ENCODE measurements at regions of chr4 and their contacts with region 1.

Region 1: DNA sequence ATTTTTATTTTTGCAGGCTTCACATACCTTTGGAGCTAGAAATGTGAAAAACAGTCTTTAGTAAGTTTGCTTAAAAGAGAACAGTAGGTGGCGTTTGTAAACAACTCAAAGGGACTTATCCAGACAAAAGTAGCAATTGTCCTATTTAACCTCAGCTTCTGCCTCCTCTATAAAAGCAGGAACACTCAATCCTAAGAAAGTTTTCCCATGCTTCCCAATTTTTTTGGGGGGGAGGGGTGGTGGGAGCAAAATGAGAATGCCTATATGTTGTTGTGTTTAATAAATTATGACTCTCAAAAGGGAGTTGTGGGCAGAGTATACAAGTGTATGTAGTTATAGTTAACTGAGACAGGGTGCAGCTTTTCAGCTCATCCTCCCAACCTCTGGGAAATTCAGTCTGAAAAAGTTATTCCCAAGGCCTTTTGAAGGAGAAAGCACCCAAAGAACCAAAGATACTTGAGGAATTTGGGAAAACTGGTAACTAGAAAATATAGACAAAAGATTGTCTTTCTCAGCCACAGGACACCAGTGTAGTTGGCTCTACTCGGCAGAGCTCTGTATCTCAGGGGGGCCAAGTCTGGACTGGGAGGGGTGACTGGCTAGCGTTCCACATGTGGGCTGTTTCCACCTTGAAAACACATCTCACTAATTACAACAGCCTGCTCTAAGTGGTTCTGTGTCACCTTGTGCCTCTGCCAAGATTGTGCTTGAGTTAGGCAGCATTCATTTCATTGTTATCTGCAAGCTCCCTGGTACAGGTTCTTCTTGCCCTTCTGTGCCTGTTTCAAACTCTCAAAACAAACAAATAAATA is 2.8 kb downstream of the SFRP2 start:
- DNase-seq: peak; percentile 41
- H3K4me3 Mint-ChIP-seq: no peak overlapping the region
- H3K27ac Mint-ChIP-seq: no peak overlapping the region
- H3K4me1 Mint-ChIP-seq: peaks cover 11% of the 10 kb centered on the region
- H3K27me3 Mint-ChIP-seq: peaks cover 83% of the 10 kb centered on the region

Region 2: GRCh38 chr4:153905231-153905630 is 119.1 kb after region 1 on chr4:
- intact Hi-C with region 1: no loop called
- DNase-seq: no peak
- H3K4me3 Mint-ChIP-seq: no peak overlapping the region
- H3K27ac Mint-ChIP-seq: no peak overlapping the region
- H3K4me1 Mint-ChIP-seq: no peaks in the 10 kb centered on the region
- H3K27me3 Mint-ChIP-seq: peaks cover 3% of the 10 kb centered on the region

Region 3: GRCh38 chr4:154024097-154024694 is 238.1 kb after region 1 on chr4:
- intact Hi-C with region 1: loop called (anchors 10 kb)
- DNase-seq: no peak
- H3K4me3 Mint-ChIP-seq: no peak overlapping the region
- H3K27ac Mint-ChIP-seq: no peak overlapping the region
- H3K4me1 Mint-ChIP-seq: no peaks in the 10 kb centered on the region
- H3K27me3 Mint-ChIP-seq: peaks cover 5% of the 10 kb centered on the region

Region 4: GRCh38 chr4:154491341-154492271 is 705.5 kb after region 1 on chr4 and contains the start of gene DCHS2:
- intact Hi-C with region 1: loop called (anchors 5 kb)
- DNase-seq: peak; percentile 68
- H3K4me3 Mint-ChIP-seq: peak within 1 kb of the TSS; percentile 66
- H3K27ac Mint-ChIP-seq: peak within 1 kb of the TSS; percentile 29
- H3K4me1 Mint-ChIP-seq: peaks cover 13% of the 10 kb centered on the region
- H3K27me3 Mint-ChIP-seq: peaks cover 68% of the 10 kb centered on the region
- total RNA-seq, gene DCHS2: not detected in 2 replicates

Region 5: GRCh38 chr4:154743683-154744340 is 957.7 kb after region 1 on chr4 and contains the start of gene LRAT:
- intact Hi-C with region 1: loop called (anchors 5 kb)
- DNase-seq: peak; percentile 87
- H3K4me3 Mint-ChIP-seq: peak within 1 kb of the TSS; percentile 84
- H3K27ac Mint-ChIP-seq: no peak within 1 kb of the TSS
- H3K4me1 Mint-ChIP-seq: peaks cover 14% of the 10 kb centered on the region
- H3K27me3 Mint-ChIP-seq: peaks cover 71% of the 10 kb centered on the region
- total RNA-seq, gene LRAT: not detected in 2 replicates